ENCODE measurements at regions of chr17 and their contacts with region 1.

Region 1: DNA sequence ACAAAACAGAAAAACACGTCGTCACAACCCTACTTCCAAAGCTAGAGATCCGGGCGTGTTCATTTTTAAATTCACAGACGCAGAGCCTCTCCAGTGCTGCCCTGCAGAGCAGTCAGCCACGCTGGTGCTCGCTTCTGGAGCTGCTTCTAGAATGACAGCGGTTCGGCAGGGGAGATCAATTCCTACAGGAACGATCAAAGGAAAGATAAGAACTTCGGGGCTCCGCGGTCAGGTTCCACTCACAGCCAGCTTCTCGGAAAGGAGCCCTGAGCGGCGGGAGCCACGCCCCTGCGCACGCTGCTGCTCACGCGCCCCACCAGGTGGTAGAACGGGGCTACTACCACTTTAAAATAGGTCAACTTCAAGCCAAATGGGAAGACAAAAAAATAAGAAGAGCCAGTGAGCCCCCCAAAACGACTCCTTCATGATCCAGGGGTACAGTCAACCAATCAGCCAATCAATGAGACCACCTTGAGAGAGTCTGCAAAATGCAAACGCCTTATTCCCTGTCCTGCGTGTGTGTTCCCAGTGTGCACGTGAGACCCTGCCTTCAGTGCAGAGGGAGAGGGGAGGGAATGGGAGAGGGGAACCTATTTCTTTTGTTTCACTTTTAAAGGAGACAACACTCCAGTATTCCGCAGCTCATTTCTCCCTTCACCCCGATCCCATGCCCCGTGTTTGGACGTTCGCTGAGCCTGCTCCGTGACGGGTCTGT is 209.7 kb downstream of the RBFOX3 start:
- DNase-seq: peak; percentile 25
- H3K4me3 ChIP-seq: peak overlapping the region in 1 of 3 experiments; percentile 23
- H3K27ac ChIP-seq: no peak overlapping the region
- H3K4me1 ChIP-seq: no peaks in the 10 kb centered on the region
- H3K27me3 ChIP-seq: peaks cover 5% of the 10 kb centered on the region
- CTCF ChIP-seq: peak; percentile 79 to 91

Region 2: DNA sequence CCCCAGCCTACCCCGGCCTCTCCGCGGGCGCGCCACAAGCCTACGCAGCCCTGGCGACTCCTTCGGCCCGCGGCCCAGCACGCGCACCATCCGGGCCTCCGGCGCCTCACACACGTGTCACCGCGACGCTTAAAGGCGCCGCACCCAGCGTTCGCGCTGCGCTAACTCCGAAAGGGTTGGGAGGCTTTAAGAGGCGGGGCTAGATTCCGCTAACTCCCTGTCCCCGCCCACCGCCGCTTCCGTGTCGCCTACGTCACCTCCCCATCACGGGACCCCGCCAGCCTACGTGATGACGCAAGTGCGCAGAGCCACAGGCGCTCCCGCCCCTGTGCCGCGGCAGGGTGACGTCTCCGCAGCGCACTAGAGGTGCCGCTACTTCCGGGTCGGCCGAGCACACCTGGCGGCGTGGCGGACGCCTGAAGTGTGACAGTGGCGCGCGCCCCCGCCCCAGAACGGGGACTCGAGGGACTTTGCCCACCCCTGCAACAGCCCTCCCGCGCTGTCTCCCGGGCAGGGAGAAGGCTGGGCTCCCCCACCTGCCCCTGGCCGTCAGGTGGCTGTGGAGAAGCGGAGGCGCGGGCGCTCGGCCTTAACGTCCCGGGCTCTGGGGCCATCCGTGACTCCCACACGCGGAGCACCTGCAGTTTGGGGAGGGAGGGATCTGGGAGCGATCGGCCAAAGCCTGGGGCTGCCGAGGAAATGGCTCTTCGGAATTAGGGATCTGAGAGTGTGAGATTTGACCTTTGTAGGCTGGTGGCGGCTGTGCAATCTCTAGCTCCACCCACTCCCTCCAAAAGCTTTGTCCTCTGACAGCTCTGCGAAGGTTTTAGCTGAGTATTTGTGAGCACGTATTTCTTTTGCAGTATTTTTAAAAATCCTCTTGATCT is 560.2 kb before region 1 on chr17 and contains the start of gene USP36:
- CTCF ChIA-PET with region 1: no interaction called
- dilution Hi-C with region 1: no loop called
- in situ Hi-C with region 1: no loop called
- intact Hi-C with region 1: no loop called
- DNase-seq: peak; percentile 99
- H3K4me3 ChIP-seq: peak within 1 kb of the TSS; percentile 76 to 88 (median 79)
- H3K27ac ChIP-seq: peak within 1 kb of the TSS; percentile 89
- H3K4me1 ChIP-seq: peaks cover 15% of the 10 kb centered on the region
- H3K27me3 ChIP-seq: no peaks in the 10 kb centered on the region
- CTCF ChIP-seq: peak in 1 of 2 donors; percentile 11
- total RNA-seq, gene USP36: 35.7 to 80.8 TPM

Region 3: DNA sequence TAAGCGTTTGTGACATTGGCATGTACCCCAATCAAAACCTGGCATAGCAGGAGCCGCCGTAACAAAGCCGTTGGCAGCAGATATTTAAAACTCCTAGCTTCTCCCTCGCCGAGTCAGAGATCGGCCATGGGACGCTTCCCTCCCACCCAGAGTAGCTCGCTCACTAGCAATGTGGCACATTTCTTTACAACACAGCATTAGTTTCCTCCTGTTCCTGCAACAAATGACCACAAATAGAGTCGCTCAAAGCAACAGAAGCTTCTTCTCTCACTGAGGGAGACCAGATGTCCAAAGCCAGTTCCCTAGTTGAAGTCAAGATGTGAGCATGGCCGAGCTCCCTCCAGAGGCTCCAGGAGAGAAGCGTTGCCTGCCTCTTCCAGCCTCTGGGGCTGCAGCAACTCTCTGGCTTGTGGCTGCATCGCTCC is 103.0 kb after region 1 on chr17:
- CTCF ChIA-PET with region 1: no interaction called
- dilution Hi-C with region 1: no loop called
- in situ Hi-C with region 1: no loop called
- intact Hi-C with region 1: no loop called
- DNase-seq: no peak
- H3K4me3 ChIP-seq: no peak overlapping the region
- H3K27ac ChIP-seq: no peak overlapping the region
- H3K4me1 ChIP-seq: no peaks in the 10 kb centered on the region
- H3K27me3 ChIP-seq: no peaks in the 10 kb centered on the region
- CTCF ChIP-seq: no peak

Region 4: GRCh38 chr17:79612468-79613194 is 211.5 kb after region 1 on chr17:
- CTCF ChIA-PET with region 1: no interaction called
- dilution Hi-C with region 1: no loop called
- in situ Hi-C with region 1: no loop called
- intact Hi-C with region 1: loop called (anchors 1 kb)
- DNase-seq: peak; percentile 29
- H3K4me3 ChIP-seq: no peak overlapping the region
- H3K27ac ChIP-seq: no peak overlapping the region
- H3K4me1 ChIP-seq: no peaks in the 10 kb centered on the region
- H3K27me3 ChIP-seq: peaks cover 19% of the 10 kb centered on the region
- CTCF ChIP-seq: peak; percentile 62 to 74

Region 5: DNA sequence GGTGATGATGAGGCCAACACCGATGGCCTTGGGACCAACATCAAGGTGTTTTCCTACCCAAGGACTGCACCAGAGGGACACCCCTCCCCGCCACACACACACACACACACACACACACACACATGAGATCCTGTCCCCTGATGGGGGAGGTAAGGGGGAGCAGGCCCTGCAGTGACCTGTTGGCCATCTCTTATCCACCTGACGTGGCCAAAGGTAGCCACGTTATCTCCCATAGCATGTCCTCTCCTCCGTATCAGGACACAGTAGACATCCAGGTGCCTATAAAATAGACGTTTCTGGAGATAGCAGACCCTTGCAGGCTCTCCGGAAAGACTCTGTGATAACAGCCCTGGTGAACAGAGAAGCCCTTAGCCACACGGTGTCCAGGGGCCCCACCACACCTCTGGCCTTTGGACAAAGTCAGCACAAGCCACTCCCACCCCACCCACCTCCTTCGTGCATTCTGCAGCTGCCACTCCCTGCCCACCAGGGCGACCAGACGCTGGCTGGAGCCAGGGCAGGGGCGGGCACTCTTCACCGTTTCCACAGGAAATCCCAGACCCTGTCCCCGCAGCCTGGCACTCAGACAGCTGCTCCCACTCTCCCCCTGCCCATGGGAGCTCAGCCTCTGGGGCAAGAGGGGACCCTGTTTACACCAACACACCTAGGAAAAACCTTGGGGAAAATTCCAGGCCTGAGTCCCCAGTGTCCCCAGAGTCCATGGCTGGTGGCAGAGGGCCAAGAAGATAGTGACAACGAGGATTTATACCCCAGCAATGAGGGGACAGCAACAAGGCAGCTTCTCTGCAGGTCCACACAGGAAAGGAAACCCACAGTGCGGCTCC is 314.2 kb after region 1 on chr17:
- CTCF ChIA-PET with region 1: no interaction called
- dilution Hi-C with region 1: no loop called
- in situ Hi-C with region 1: loop called in 1 of 2 experiments (anchors 10 kb)
- intact Hi-C with region 1: no loop called
- DNase-seq: no peak
- H3K4me3 ChIP-seq: no peak overlapping the region
- H3K27ac ChIP-seq: no peak overlapping the region
- H3K4me1 ChIP-seq: no peaks in the 10 kb centered on the region
- H3K27me3 ChIP-seq: no peaks in the 10 kb centered on the region
- CTCF ChIP-seq: no peak

Measured in mammary epithelial cell (primary cell).